Heart right ventricle (tissue), 16 donors: ENCODE measurements at regions of chr11 and their contacts with region 1.

Region 1: GRCh38 chr11:33996498-33997454 is 54.8 kb upstream of the CAPRIN1 start:
- DNase-seq: peak; percentile 20 to 71
- ATAC-seq: peak; percentile 86 to 97 (median 94)
- H3K4me3 ChIP-seq: no peak overlapping the region
- H3K27ac ChIP-seq: no peak overlapping the region
- H3K4me1 ChIP-seq: peaks cover 0 to 9% (median 3%) of the 10 kb centered on the region in 9 donors
- H3K27me3 ChIP-seq: peaks cover 0 to 25% (median 15%) of the 10 kb centered on the region in 7 donors
- CTCF ChIP-seq: peak; percentile 69 to 91 (median 83)

Region 2: DNA sequence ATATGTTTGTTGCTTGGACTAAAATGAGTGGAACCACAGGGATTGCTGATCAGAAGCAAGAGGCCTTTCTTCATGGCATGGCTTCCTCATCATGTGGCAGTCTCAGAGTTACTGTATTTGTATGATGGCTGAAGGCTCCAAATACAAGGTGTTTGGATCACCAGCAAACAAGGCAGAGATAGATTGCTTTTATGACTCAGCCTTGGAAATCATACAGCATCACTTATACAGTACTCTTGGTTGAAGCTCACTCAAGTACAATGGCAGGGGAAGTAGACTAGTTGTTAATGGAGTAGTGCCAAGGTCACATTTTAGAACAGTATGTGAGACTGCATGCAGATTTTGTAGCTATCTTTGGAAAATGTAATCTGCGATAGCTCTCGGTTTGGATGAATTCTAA is 71.3 kb after region 1 on chr11:
- intact Hi-C with region 1: loop called in 1 of 10 experiments (anchors 5 kb)
- DNase-seq: peak in 1 of 2 donors; percentile 4
- ATAC-seq: peak; percentile 60 to 94 (median 88)
- H3K4me3 ChIP-seq: no peak overlapping the region
- H3K27ac ChIP-seq: peak overlapping the region in 6 of 10 donors; percentile 32 to 63 (median 44)
- H3K4me1 ChIP-seq: peaks cover 3 to 71% (median 55%) of the 10 kb centered on the region in 9 donors
- H3K27me3 ChIP-seq: no peaks in the 10 kb centered on the region
- CTCF ChIP-seq: no peak

Region 3: GRCh38 chr11:34114471-34114870 is 117.7 kb after region 1 on chr11:
- intact Hi-C with region 1: loop called in 4 of 10 experiments (anchors 10 kb)
- DNase-seq: no peak
- ATAC-seq: no peak
- H3K4me3 ChIP-seq: no peak overlapping the region
- H3K27ac ChIP-seq: no peak overlapping the region
- H3K4me1 ChIP-seq: peaks cover 0 to 8% (median 0%) of the 10 kb centered on the region in 9 donors
- H3K27me3 ChIP-seq: no peaks in the 10 kb centered on the region
- CTCF ChIP-seq: no peak

Region 4: DNA sequence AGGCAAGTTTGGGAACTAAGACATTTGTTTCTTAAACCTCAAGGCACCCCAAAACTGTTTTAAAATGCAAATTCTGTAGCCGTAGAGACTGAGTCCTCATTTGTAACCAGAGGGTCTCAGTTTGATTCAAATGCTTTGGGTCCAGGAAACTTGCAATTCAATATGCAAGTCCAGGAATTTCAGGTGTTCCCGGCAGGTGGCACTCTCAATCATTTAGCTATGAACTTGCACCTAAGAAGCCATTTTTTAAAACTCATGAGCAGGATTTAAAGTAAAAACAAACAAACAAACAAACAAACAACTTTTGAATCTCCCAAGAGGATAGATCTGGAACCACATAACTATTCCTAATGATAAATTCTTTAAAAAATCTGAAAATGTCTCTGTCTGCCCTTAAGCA is 369.7 kb after region 1 on chr11:
- intact Hi-C with region 1: loop called in 4 of 10 experiments (anchors 2 to 5 kb)
- DNase-seq: no peak
- ATAC-seq: no peak
- H3K4me3 ChIP-seq: no peak overlapping the region
- H3K27ac ChIP-seq: no peak overlapping the region
- H3K4me1 ChIP-seq: peaks cover 0 to 6% (median 0%) of the 10 kb centered on the region in 9 donors
- H3K27me3 ChIP-seq: peaks cover 0 to 15% (median 0%) of the 10 kb centered on the region in 7 donors
- CTCF ChIP-seq: peak in 6 of 9 donors; percentile 18 to 48 (median 36)

Region 5: GRCh38 chr11:34492806-34493414 is 496.1 kb after region 1 on chr11:
- intact Hi-C with region 1: loop called in 2 of 10 experiments (anchors 10 kb)
- DNase-seq: peak in 1 of 2 donors; percentile 41
- ATAC-seq: no peak
- H3K4me3 ChIP-seq: no peak overlapping the region
- H3K27ac ChIP-seq: no peak overlapping the region
- H3K4me1 ChIP-seq: no peaks in the 10 kb centered on the region
- H3K27me3 ChIP-seq: peaks cover 0 to 19% (median 7%) of the 10 kb centered on the region in 7 donors
- CTCF ChIP-seq: peak; percentile 47 to 77 (median 70)